H1 (cell line): ENCODE measurements at regions of chr12 and their contacts with region 1.

Region 1: GRCh38 chr12:132460571-132460970 is 29.4 kb upstream of the FBRSL1 start:
- DNase-seq: peak in 1 of 2 experiments; percentile 75
- H3K4me3 ChIP-seq: no peak overlapping the region
- H3K27ac ChIP-seq: no peak overlapping the region
- H3K4me1 ChIP-seq: no peaks in the 10 kb centered on the region
- H3K27me3 ChIP-seq: peaks cover 31 to 60% (median 54%) of the 10 kb centered on the region in 4 experiments
- CTCF ChIP-seq: peak in 2 of 3 experiments; percentile 66 to 79; a peak in 3 of 4 replicates
- EP300 ChIP-seq: no peak
- POLR2A ChIP-seq: no peak
- RAD21 ChIP-seq: peak; percentile 66 to 71

Region 2: DNA sequence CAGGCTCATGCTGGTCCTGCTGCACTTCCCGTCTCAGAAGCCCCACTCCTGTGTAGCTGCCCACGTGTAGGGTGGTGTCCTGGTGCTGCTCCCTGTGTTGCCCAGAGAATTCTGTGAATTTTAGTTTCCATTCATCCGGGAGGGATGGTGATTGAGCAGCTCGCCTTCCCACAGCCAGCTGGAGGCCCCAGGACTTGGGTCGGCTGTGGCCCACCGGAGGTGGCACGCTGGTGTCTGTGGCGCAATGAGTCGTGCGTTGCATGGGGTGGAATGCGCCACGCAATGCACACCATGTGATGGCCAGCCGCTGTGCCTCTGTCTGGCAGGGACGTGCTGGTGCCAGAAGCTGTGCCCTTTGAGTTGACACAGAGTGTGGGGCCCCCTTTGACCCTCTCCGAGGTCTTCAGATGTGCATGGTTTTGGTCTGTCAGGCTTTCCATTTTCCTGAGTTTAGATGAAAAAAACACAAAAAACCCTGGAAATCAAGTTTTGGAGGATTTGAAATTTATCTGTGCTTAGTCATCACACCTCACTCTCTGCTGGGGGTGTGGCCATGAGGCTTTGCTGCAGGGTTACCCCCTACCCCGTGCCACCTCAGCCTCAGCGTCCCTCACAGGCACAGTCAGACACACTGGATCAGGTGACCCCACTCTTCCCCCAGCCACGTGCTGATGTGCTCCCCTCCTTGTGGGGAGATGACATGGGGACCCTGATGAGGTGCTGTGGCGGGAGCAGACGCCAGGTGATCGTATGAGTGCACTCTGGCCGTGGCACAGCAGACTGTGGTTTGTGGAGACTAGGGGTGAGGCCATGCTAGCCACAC is 446.3 kb before region 1 on chr12:
- CTCF ChIA-PET with region 1: no interaction called
- POLR2A ChIA-PET with region 1: no interaction called
- DNase-seq: no peak
- H3K4me3 ChIP-seq: no peak overlapping the region
- H3K27ac ChIP-seq: no peak overlapping the region
- H3K4me1 ChIP-seq: no peaks in the 10 kb centered on the region; a peak in 2 of 7 replicates
- H3K27me3 ChIP-seq: no peaks in the 10 kb centered on the region
- CTCF ChIP-seq: no peak
- EP300 ChIP-seq: no peak
- POLR2A ChIP-seq: no peak
- RAD21 ChIP-seq: no peak

Region 3: DNA sequence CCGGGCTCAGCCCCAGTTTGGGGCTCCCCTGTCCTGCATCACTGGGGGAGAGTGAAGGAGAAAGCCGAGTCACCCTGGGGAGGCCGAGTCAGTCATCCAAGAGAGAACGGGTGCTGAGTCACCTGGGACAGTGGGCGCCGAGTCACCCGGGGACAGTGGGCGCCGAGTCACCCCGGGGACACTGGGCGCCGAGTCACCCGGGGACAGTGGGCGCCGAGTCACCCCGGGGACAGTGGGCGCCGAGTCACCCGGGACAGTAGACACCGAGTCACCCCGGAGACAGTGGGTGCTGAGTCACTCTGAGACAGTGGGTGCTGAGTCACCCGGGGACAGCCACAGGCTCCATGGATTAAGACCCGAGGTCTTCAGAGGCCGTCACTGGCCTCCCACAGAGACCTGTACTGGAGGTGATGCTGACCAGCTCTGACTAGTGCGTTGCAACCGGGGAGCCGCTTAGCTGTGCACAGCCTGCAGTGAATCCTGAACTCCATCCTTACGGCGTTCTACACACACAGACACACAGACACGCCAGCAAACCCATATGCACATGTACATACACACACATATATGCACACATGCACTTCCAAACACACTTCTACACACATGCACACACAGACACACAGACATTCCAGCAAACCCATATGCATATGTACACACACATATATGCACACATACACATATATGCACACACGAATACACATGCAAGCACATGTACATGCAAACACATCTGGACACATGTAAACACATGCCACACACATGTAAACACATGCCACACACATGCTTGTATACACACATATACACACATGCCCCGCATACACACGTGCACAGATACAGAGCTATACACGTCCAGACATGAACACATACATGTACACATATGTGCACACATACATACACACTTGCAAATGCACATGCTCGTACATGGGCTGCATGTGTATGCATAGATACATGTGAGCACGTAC is 66.3 kb before region 1 on chr12:
- CTCF ChIA-PET with region 1: no interaction called
- POLR2A ChIA-PET with region 1: no interaction called
- DNase-seq: no peak
- H3K4me3 ChIP-seq: no peak overlapping the region
- H3K27ac ChIP-seq: no peak overlapping the region
- H3K4me1 ChIP-seq: peaks cover 0 to 24% (median 17%) of the 10 kb centered on the region in 4 experiments; a peak in 6 of 7 replicates
- H3K27me3 ChIP-seq: peaks cover 0 to 30% (median 20%) of the 10 kb centered on the region in 4 experiments; a peak in 6 of 7 replicates
- CTCF ChIP-seq: no peak
- EP300 ChIP-seq: no peak
- POLR2A ChIP-seq: no peak
- RAD21 ChIP-seq: no peak

Region 4: DNA sequence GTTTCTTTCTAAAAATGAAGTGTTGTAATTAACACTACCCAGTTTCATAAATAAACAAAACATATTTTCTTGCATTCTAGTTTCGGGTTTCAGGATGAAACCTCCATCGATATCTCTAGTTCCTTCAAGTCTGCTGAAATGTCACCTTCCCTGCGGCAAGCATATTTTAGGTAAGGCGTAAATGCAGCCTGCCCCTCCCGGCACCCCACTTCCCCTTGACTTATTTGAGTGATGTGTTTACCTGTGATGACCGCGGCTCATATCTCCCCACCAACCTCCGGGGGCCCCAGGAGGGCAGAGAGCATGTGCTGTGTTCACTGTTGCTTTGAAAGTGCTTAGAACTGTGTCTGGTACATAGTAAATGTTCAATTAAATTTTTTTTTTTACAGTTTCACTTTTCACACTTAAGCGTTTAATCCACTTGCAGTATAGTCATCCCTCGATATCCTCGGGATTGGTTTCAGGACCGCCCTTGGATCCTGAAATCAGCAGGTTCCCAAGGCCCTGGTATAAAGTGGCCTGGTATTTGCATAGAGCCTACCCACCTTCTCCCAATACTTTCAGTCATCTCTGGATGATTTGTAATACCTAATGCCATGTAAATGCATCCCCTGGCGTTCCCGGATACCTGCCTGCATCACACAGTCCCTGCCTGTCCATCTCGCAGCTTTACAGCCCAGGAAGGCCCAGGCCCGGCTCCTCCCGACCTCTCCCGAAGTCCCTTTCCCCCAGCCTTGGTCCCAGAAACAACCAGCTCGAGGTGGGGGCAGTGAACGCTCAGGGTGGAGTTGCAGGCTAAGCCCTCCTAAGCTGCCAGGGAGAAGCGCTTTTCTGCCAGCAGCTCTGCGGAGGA is 10.8 kb before region 1 on chr12:
- CTCF ChIA-PET with region 1: interaction called, 12 read pairs
- POLR2A ChIA-PET with region 1: no interaction called
- DNase-seq: no peak
- H3K4me3 ChIP-seq: no peak overlapping the region
- H3K27ac ChIP-seq: no peak overlapping the region
- H3K4me1 ChIP-seq: peaks cover 0 to 6% (median 3%) of the 10 kb centered on the region in 4 experiments; a peak in 4 of 7 replicates
- H3K27me3 ChIP-seq: peaks cover 7 to 66% (median 55%) of the 10 kb centered on the region in 4 experiments
- CTCF ChIP-seq: no peak
- EP300 ChIP-seq: no peak
- POLR2A ChIP-seq: no peak
- RAD21 ChIP-seq: no peak

Region 5: DNA sequence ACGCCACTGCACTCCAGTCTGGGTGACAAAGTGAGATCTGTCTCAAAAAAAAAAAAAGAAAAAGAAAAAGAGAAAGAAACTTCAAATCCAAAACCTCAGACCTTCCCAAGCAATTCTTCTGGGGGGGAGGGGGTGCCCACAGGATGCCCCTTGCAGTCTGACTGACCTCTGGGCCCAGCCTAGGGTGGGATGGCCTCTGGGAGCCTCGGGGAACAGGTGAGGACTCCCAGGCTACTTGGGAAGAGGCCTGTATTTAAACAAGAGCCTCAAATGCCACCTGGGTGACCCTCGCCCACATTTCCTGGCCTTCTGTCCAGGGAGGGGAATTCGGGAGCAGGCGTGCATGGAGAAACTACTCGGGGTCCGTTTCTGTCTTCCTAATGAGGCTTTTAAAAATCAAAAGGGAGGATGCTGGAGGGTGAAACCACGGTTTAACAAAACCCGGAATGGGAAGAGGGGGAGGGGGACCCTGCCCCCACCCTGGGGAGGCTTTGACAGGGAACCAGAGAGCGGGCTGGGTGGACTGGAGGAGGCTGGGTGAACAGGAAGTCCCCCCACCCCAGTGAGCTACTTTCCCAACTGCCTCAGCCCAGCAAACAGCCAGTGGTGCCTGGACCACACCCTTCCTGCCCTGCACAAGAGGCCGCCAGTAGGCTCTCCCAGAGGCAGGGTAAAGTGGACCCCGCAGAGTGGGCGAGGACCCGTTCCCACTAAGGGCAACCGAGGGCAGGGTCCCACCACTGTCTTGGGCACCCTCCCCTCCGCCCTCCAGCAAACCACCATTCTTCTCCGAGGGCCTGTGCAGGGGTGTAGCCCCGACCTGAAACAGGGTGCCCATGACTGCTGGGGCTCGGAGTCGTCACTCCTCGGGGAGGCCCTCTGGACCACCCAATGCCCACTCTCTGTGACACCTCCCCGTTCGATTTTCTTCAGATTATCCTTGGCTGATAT is 27.8 kb after region 1 on chr12:
- CTCF ChIA-PET with region 1: interaction called, 11 read pairs
- POLR2A ChIA-PET with region 1: no interaction called
- DNase-seq: no peak
- H3K4me3 ChIP-seq: peak overlapping the region in 3 of 4 experiments; percentile 26 to 80 (median 40); a peak in 4 of 8 replicates
- H3K27ac ChIP-seq: no peak overlapping the region
- H3K4me1 ChIP-seq: peaks cover 0 to 14% (median 1%) of the 10 kb centered on the region in 4 experiments; a peak in 3 of 7 replicates
- H3K27me3 ChIP-seq: peaks cover 24 to 73% (median 56%) of the 10 kb centered on the region in 4 experiments
- CTCF ChIP-seq: no peak
- EP300 ChIP-seq: no peak
- POLR2A ChIP-seq: no peak
- RAD21 ChIP-seq: no peak

Region 6: GRCh38 chr12:132632501-132633228 is 172.1 kb after region 1 on chr12:
- CTCF ChIA-PET with region 1: no interaction called
- POLR2A ChIA-PET with region 1: no interaction called
- DNase-seq: no peak
- H3K4me3 ChIP-seq: no peak overlapping the region
- H3K27ac ChIP-seq: no peak overlapping the region
- H3K4me1 ChIP-seq: no peaks in the 10 kb centered on the region
- H3K27me3 ChIP-seq: no peaks in the 10 kb centered on the region
- CTCF ChIP-seq: no peak
- EP300 ChIP-seq: no peak
- POLR2A ChIP-seq: no peak
- RAD21 ChIP-seq: no peak